ENCODE measurements at regions of chr7 and their contacts with region 1.

Region 1: GRCh38 chr7:133050200-133050995 is 31.5 kb downstream of the CHCHD3 start:
- DNase-seq: no peak
- H3K4me3 Mint-ChIP-seq: no peak overlapping the region
- H3K27ac Mint-ChIP-seq: no peak overlapping the region
- H3K4me1 Mint-ChIP-seq: no peaks in the 10 kb centered on the region
- H3K27me3 Mint-ChIP-seq: no peaks in the 10 kb centered on the region

Region 2: DNA sequence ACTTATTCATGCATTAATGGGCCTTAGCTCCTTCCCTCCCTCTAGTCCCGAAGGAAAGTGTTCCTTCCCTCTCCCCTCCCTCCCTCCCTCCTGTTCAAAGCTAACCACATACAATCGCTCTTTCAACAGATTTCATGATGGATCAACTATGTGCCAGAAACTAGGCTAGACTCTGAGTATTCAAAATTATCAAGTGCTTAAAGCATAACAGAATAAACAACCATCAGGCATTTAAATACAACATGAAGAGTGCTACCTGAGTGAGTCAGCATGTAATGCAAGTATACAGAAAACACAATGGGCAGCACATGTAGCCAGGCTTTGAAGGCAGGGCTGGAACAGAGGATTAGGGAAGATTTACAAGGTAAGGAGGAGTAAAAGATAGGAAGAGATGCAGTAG is 20.2 kb after region 1 on chr7:
- CTCF ChIA-PET with region 1: interaction called, 3 read pairs
- POLR2A ChIA-PET with region 1: interaction called, 10 read pairs
- DNase-seq: no peak
- H3K4me3 Mint-ChIP-seq: no peak overlapping the region
- H3K27ac Mint-ChIP-seq: no peak overlapping the region
- H3K4me1 Mint-ChIP-seq: no peaks in the 10 kb centered on the region
- H3K27me3 Mint-ChIP-seq: no peaks in the 10 kb centered on the region